MCF 10A (cell line): ENCODE measurements at regions of chr3 and their contacts with region 1.

Region 1: DNA sequence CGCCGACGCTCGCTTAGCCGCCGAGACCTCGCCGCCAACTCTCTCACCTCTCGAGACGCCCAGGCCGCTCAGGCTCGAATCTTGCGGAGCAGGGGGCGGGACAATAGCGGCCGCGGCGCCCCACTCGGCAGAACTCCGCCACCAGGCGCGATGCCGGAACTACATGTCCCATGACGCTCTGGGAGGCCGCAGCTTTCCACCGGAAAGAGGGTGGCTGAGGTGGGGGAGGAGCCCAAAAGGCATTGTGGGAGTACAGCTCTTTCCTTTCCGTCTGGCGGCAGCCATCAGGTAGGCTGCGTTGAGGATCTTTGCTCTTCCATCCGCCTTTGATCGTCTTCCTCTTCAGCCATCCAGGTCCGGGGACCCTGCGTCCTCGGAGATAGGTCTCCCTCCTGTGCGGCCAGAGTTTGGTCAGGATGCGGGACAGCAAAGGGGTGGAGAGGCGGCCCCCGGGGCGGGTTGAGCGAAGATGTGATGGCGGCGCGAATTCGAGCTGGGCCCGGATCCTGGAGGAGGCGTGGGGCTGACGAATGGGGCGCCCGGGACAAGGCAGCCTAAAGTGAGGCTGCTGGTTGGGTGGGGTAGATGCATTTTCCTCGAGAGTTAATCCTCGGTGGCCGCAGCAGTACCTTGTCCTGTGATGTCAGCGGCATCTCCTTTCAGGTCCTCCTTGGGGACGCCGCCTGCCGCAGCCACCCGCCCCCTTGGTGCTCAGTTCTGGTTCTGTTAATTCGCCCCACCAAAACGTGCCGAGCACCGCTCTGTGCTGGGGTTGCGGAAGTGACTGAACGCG is at the starts of genes NKIRAS1 and RPL15:
- DNase-seq: peak; percentile 98
- H3K4me3 Mint-ChIP-seq: peak within 1 kb of the TSS; percentile 92
- H3K27ac Mint-ChIP-seq: peak within 1 kb of the TSS; percentile 76
- H3K4me1 Mint-ChIP-seq: peaks cover 26% of the 10 kb centered on the region
- H3K27me3 Mint-ChIP-seq: no peaks in the 10 kb centered on the region
- CTCF ChIP-seq: peak; percentile 42
- total RNA-seq, gene NKIRAS1: 6.8 and 9.7 TPM in 2 replicates
- total RNA-seq, gene RPL15: 2,310 and 2,617 TPM in 2 replicates

Region 2: DNA sequence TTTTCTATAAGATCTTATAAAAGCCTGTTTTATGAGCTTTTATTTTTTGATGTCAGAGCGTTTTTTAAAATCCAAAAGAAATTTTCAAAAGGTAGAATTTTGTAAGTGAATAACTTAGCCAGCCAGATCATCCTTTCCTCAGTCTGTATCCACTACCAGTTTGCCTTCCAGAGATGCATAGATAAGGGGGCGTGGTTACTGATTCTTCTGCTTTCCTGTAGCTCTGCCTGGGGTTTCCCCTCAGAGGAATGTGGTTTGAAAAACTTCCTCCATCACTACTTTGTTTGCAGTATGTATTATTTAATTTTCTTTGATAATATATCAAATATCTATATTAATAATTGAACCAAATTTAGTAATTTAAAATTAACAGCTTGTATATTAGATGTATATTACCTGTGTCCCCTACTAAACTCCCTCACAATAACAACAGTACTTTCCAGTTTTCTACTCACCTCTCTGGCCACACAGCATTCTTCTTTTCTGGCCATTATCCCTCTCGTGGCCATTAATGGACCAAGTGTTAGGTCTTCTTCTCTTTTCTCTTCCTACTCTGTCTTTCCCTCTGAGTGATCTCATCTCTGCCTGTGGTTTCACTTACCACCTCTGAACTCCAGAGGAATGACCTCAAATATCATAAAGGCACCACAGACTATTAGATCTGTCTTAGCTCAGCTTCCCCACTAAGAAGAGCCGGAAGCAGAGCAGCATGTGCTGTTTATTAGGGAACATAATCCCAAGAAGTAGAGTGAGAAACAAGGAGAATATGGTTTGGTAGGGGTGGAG is 474.3 kb before region 1 on chr3:
- CTCF ChIA-PET with region 1: no interaction called
- POLR2A ChIA-PET with region 1: no interaction called
- intact Hi-C with region 1: no loop called
- DNase-seq: no peak
- H3K4me3 Mint-ChIP-seq: no peak overlapping the region
- H3K27ac Mint-ChIP-seq: no peak overlapping the region
- H3K4me1 Mint-ChIP-seq: peaks cover 14% of the 10 kb centered on the region
- H3K27me3 Mint-ChIP-seq: no peaks in the 10 kb centered on the region
- CTCF ChIP-seq: no peak

Region 3: DNA sequence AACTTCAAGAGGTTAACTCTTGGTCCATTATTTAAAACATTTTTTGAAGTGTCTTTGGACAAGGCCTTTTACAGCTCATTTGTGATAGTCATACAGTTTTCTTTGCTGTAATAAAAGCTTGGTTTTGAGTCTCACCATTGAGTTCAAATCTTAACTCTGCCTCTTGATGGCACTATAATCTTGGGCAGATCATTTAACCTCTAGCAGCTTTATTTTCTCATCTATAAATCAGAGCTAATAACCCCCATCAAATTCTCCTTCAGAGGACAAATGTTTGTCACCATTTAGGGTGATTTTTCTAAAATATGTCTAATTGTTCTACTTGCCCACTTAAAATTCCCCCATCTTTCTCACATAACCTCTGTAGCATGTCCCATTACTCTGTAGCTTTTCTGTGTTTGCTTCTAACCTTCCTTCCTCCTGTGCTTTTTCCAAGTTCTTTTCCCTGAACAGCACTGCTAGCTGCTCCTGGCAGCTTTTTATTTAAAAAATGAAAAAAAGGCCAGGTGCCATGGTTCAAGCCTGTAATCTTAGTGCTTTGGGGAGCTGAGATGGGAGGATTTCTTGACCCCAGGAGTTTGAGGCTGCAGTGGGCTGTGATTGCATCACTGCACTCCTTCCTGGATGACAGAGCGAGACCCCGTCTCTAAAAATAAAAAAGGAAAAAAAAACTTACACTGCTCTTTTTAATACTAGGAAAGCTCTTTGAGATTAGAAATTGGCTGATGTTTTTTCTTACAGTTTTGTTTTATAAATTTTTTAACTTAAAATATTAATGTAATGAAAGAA is 82.8 kb before region 1 on chr3:
- CTCF ChIA-PET with region 1: interaction called, 6 read pairs
- POLR2A ChIA-PET with region 1: interaction called, 12 read pairs
- intact Hi-C with region 1: no loop called
- DNase-seq: no peak
- H3K4me3 Mint-ChIP-seq: no peak overlapping the region
- H3K27ac Mint-ChIP-seq: no peak overlapping the region
- H3K4me1 Mint-ChIP-seq: peaks cover 17% of the 10 kb centered on the region
- H3K27me3 Mint-ChIP-seq: no peaks in the 10 kb centered on the region
- CTCF ChIP-seq: peak; percentile 13

Region 4: DNA sequence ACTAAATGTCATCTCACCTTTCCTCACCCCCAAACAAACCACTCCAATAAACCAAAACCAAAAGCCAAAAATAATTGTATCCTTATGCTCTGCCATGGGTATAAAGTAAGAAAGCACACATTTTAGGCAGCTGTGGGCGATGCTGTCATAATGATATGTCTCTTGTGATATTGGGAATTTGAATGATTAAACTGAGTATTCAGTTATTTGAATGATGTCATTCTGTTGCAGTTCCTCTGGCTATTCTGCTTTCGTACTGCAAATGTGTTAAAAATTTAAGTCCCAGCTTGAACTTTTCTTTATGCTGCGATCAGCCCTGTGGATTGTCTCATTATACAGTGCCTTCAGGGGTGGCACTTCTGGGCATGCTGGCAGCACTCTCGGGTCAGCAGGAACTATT is 17.2 kb after region 1 on chr3:
- CTCF ChIA-PET with region 1: no interaction called
- POLR2A ChIA-PET with region 1: interaction called, 46 read pairs
- intact Hi-C with region 1: no loop called
- DNase-seq: no peak
- H3K4me3 Mint-ChIP-seq: no peak overlapping the region
- H3K27ac Mint-ChIP-seq: no peak overlapping the region
- H3K4me1 Mint-ChIP-seq: peaks cover 4% of the 10 kb centered on the region
- H3K27me3 Mint-ChIP-seq: no peaks in the 10 kb centered on the region
- CTCF ChIP-seq: no peak

Region 5: DNA sequence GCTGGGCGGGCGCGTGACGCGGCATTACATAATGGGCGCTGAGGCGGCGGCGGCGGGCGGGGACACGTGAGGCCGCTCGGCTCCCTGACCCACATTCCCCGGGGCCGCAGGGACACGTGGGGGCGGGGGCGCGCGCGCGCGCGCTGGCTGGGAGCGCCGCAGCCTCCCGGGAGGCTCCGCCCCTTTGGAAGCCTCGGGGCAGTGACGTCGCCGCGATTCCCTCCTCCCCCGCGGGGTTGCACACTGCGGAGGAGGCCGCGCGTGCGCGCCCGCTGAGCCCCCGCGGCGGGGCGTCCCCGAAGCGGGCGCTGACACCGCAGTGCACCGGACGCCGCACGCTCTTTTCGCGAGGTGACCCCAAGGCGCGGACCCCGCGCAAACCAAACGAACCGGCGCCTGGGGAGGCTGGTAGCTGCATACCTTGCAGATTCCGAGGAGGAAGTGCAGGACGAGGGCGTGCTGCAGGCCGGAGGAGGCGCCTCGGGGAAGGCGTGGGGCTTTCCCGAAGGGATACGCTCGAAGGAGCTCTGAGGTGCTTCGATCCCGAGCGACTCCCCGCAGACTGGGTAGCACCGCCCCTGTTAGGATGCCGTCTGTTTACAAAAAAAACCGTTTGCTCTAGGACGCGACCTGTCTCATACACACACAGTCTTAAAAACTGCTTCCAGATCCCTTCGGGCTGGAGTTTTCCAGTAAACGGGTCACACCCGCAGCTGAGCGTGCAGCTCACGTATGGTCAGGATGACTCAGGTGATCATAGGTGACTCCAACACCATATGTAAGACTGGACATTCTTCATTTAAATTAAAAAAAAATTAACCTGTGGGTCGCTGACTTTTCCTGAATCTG is 29.0 kb after region 1 on chr3:
- CTCF ChIA-PET with region 1: interaction called, 5 read pairs
- POLR2A ChIA-PET with region 1: interaction called, 234 read pairs
- intact Hi-C with region 1: loop called (anchors 1 kb)
- DNase-seq: peak; percentile 94
- H3K4me3 Mint-ChIP-seq: peak overlapping the region; percentile 73
- H3K27ac Mint-ChIP-seq: peak overlapping the region; percentile 88
- H3K4me1 Mint-ChIP-seq: peaks cover 27% of the 10 kb centered on the region
- H3K27me3 Mint-ChIP-seq: no peaks in the 10 kb centered on the region
- CTCF ChIP-seq: no peak

Region 6: GRCh38 chr3:23968463-23969184 is 51.5 kb after region 1 on chr3:
- CTCF ChIA-PET with region 1: no interaction called
- POLR2A ChIA-PET with region 1: interaction called, 61 read pairs
- intact Hi-C with region 1: no loop called
- DNase-seq: peak; percentile 87
- H3K4me3 Mint-ChIP-seq: peak overlapping the region; percentile 1
- H3K27ac Mint-ChIP-seq: peak overlapping the region; percentile 69
- H3K4me1 Mint-ChIP-seq: peaks cover 29% of the 10 kb centered on the region
- H3K27me3 Mint-ChIP-seq: no peaks in the 10 kb centered on the region
- CTCF ChIP-seq: no peak